ENCODE measurements at regions of chr16 and their contacts with region 1.

Region 1: GRCh38 chr16:90022209-90023064 is 3.2 kb upstream of the DBNDD1 start:
- DNase-seq: peak; percentile 92
- ATAC-seq: peak; percentile 79
- H3K4me3 ChIP-seq: peak overlapping the region; percentile 82 to 87 (median 82)
- H3K27ac ChIP-seq: peak overlapping the region; percentile 75
- H3K4me1 ChIP-seq: peaks cover 44% of the 10 kb centered on the region
- H3K27me3 ChIP-seq: no peaks in the 10 kb centered on the region; a peak in 1 of 5 replicates
- CTCF ChIP-seq: no peak
- EP300 ChIP-seq: peak in 1 of 2 experiments; percentile 28; a peak in 2 of 4 replicates
- POLR2A ChIP-seq: peak; percentile 70 to 78
- RAD21 ChIP-seq: peak; percentile 17; the same call in 1 of the 2 replicates

Region 2: DNA sequence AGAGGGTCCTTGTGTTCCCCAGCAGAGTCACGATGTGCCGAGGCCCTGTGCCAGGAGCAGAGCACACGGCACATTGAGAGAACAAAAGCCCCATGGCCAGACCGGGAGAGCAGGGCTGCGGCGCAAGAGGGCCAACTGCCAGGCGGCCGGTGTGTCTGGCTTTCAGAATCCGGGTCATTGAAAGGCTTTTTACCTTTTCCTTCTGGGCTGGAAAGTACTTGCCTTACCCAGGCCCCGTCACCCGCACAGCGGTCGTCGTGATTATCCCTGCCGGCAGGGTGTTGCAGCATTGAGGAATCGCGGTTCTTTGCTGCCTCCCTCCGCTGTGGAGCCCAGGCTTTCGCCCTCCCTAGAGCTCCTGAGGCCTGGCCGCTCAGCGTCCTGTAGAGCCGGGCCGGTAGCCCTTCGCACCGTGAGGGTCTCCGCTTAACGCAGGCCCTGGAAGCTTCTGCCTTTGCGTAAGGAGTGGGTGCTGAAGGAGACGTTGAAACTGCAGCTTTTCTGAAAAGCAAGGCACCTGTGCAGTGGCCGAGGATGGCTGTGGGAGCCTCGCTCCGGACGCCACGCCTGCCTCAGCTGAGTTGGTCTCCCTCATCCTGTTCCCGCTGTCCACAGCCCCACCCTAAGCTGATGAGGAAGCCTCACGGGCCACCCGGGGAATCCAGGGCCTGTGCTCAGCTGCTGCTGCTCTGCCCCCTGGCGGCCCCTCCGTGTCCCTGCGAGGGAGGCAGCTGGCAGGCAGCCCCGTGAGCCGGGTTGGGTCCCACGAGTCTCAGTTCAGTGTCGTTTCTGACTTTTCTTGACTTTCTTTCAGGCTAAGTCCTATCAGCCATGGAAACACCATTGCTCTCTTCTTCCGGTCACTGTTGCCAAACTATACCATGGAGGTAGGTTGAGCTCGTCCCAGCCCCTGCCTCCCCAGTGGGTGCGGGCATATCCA is 112.4 kb before region 1 on chr16:
- CTCF ChIA-PET with region 1: no interaction called
- POLR2A ChIA-PET with region 1: no interaction called
- in situ Hi-C with region 1: no loop called
- intact Hi-C with region 1: no loop called
- DNase-seq: peak; percentile 60
- ATAC-seq: peak; percentile 82
- H3K4me3 ChIP-seq: no peak overlapping the region
- H3K27ac ChIP-seq: no peak overlapping the region
- H3K4me1 ChIP-seq: peaks cover 17% of the 10 kb centered on the region
- H3K27me3 ChIP-seq: no peaks in the 10 kb centered on the region
- CTCF ChIP-seq: peak; percentile 95
- EP300 ChIP-seq: no peak
- POLR2A ChIP-seq: no peak
- RAD21 ChIP-seq: peak; percentile 54

Region 3: DNA sequence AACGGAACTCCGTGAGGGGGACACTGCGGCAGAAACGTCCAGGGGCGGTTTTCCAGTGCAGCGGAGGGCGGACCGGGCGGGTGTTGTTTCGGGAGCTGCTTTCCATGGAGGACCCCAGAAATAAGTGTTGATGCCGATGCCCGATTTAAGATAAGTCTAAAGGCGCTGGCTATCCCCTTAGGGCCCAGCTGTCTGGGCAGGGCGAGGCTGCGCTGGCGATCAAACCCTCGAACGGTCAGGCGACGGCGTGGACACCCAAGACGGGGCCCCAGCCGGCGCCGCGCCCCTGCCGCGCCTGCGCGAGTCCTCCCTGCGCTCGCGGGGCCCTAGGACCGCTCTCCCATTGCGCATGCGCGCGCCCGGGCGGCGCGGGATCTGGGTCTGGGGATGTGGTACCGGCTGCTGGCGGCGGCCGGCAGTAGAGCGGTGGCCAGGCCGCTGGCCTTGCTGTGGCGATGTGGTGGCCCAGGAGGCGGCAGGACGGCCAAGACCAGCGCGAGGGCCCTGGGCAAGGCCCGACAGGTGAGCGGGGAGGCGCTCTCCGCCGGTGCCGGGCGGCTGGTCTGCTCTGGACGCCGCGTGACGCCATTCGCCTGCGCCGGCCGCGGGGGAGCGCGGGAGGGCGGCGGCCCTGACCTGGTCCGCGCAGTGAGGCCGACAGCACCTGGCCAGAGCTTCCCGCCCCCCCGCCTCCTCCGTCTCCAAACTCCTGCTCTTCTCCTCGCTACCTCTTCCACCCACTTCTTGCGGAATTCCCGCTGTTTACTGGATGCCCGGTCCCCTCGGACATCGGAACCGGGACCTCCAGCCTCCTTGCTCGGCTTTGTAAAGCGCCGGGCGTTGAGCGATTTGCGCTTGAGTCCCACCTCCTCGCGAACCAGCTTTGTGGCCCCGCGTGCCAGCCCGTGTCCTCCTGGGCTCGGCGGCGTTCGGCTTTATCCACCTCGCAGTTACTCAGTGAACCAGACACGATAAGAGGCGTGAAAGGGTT is 49.9 kb before region 1 on chr16:
- CTCF ChIA-PET with region 1: interaction called, 3 read pairs
- POLR2A ChIA-PET with region 1: interaction called, 23 read pairs
- in situ Hi-C with region 1: no loop called
- intact Hi-C with region 1: no loop called
- DNase-seq: peak; percentile 92
- ATAC-seq: peak; percentile 85
- H3K4me3 ChIP-seq: peak overlapping the region; percentile 76 to 96 (median 95)
- H3K27ac ChIP-seq: peak overlapping the region; percentile 88
- H3K4me1 ChIP-seq: peaks cover 49% of the 10 kb centered on the region
- H3K27me3 ChIP-seq: no peaks in the 10 kb centered on the region; a peak in 1 of 5 replicates
- CTCF ChIP-seq: peak; percentile 31; the same call in 1 of the 2 replicates
- EP300 ChIP-seq: peak in 1 of 2 experiments; percentile 47; a peak in 1 of 4 replicates
- POLR2A ChIP-seq: peak; percentile 92 to 97
- RAD21 ChIP-seq: peak; percentile 64; the same call in 1 of the 2 replicates

Region 4: DNA sequence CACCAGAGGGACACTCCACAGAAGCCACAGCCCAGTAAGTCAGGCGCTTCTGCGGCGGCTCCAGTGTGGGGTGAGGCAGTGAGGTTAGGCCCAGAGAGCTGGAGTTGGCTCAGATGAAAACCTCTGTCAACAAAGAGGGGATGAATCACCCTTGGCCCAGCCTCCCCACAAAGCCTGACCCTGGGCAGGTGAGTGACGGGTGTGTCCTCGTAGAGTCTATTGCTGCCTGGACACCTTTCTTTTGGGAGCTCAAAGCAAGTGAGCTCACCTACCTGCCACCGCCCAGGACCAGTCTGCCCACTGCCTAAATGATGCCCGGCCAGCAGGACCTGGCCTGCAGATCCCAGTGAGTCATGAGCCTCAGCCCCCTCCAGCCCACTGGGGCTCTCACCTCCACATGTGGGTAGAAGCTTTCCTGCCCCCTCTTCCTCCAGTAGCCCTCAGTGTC is 21.7 kb after region 1 on chr16:
- CTCF ChIA-PET with region 1: no interaction called
- POLR2A ChIA-PET with region 1: interaction called, 11 read pairs
- in situ Hi-C with region 1: no loop called
- intact Hi-C with region 1: no loop called
- DNase-seq: peak; percentile 50
- ATAC-seq: peak; percentile 19
- H3K4me3 ChIP-seq: no peak overlapping the region
- H3K27ac ChIP-seq: no peak overlapping the region
- H3K4me1 ChIP-seq: peaks cover 38% of the 10 kb centered on the region
- H3K27me3 ChIP-seq: no peaks in the 10 kb centered on the region
- CTCF ChIP-seq: no peak
- EP300 ChIP-seq: no peak
- POLR2A ChIP-seq: 0 out of 4 replicates have a peak, but pooled peaks have one; percentile 24 to 30
- RAD21 ChIP-seq: no peak